Naive thymus-derived CD4-positive, alpha-beta T cell (primary cell): ENCODE measurements at regions of chr18 and their contacts with region 1.

Region 1: DNA sequence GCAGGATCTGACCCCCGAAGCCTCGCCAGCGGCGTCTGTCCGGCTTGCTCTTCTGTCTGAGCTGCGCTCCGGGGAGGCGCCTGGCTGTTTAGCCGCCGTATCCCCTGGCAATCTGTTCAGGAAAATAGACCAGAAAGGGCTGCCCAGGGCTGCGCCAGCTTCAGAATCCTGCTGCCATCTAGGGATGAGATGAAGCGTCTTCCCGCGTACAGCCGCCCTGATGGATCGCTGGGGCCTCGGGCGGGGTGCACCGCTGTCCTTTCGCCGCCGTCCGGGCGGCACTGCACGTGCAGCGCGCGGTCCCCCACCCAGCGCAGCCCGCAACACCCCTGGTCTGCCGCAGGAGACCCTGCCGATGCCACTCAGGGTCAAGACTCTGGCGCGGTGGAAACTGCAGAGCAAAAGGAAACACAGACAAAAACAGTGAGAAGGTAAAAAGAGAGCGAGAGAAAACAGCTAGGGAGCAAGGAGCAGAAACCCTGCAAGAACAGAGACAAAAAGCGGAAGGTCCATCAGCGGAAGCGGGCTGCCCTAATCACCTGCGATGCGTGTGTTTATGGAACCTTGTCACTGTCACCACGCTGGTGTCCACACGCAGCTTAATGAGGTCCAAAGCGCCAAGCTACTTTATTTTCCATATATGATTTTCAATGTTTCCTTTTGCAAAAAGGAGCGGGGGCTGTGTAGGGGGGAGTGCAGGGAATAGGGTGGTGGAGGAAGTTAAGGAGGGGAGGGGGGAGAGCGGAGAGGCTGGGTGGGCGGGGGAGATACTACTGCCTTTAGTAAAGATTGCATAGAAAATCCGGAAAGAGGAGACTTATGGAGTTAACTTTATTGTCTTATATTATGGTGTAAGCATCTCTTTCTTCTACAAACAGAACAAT is 2113.3 kb upstream of the PIK3C3 start:
- DNase-seq: no peak
- ATAC-seq: peak; percentile 48
- H3K4me3 ChIP-seq: no peak overlapping the region
- H3K4me3 Mint-ChIP-seq: peak overlapping the region in 2 of 10 donors; percentile 17 to 21
- H3K27ac ChIP-seq: no peak overlapping the region
- H3K27ac Mint-ChIP-seq: no peak overlapping the region
- H3K4me1 ChIP-seq: no peaks in the 10 kb centered on the region
- H3K4me1 Mint-ChIP-seq: no peaks in the 10 kb centered on the region
- H3K27me3 ChIP-seq: no peaks in the 10 kb centered on the region
- H3K27me3 Mint-ChIP-seq: peaks cover 6 to 26% (median 11%) of the 10 kb centered on the region in 5 donors

Region 2: GRCh38 chr18:39627936-39628335 is 213.8 kb before region 1 on chr18:
- CTCF ChIA-PET with region 1: no interaction called
- POLR2A ChIA-PET with region 1: no interaction called
- intact Hi-C with region 1: no loop called
- DNase-seq: no peak
- ATAC-seq: no peak
- H3K4me3 ChIP-seq: no peak overlapping the region
- H3K4me3 Mint-ChIP-seq: no peak overlapping the region
- H3K27ac ChIP-seq: no peak overlapping the region
- H3K27ac Mint-ChIP-seq: no peak overlapping the region
- H3K4me1 ChIP-seq: no peaks in the 10 kb centered on the region
- H3K4me1 Mint-ChIP-seq: no peaks in the 10 kb centered on the region
- H3K27me3 ChIP-seq: no peaks in the 10 kb centered on the region
- H3K27me3 Mint-ChIP-seq: no peaks in the 10 kb centered on the region

Region 3: GRCh38 chr18:39909706-39910105 is 68.0 kb after region 1 on chr18:
- CTCF ChIA-PET with region 1: no interaction called
- POLR2A ChIA-PET with region 1: no interaction called
- intact Hi-C with region 1: loop called in 1 of 2 experiments (anchors 10 kb)
- DNase-seq: no peak
- ATAC-seq: no peak
- H3K4me3 ChIP-seq: no peak overlapping the region
- H3K4me3 Mint-ChIP-seq: no peak overlapping the region
- H3K27ac ChIP-seq: no peak overlapping the region
- H3K27ac Mint-ChIP-seq: no peak overlapping the region
- H3K4me1 ChIP-seq: no peaks in the 10 kb centered on the region
- H3K4me1 Mint-ChIP-seq: no peaks in the 10 kb centered on the region
- H3K27me3 ChIP-seq: no peaks in the 10 kb centered on the region
- H3K27me3 Mint-ChIP-seq: no peaks in the 10 kb centered on the region